Activated CD4-positive, alpha-beta memory T cell treated with anti-CD3 and anti-CD28 coated beads, Interleukin-2, amount 10 ng/mL, durations not matched to agents 7 days and 5 days (primary cell): ENCODE measurements at regions of chr1 and their contacts with region 1.

Region 1: DNA sequence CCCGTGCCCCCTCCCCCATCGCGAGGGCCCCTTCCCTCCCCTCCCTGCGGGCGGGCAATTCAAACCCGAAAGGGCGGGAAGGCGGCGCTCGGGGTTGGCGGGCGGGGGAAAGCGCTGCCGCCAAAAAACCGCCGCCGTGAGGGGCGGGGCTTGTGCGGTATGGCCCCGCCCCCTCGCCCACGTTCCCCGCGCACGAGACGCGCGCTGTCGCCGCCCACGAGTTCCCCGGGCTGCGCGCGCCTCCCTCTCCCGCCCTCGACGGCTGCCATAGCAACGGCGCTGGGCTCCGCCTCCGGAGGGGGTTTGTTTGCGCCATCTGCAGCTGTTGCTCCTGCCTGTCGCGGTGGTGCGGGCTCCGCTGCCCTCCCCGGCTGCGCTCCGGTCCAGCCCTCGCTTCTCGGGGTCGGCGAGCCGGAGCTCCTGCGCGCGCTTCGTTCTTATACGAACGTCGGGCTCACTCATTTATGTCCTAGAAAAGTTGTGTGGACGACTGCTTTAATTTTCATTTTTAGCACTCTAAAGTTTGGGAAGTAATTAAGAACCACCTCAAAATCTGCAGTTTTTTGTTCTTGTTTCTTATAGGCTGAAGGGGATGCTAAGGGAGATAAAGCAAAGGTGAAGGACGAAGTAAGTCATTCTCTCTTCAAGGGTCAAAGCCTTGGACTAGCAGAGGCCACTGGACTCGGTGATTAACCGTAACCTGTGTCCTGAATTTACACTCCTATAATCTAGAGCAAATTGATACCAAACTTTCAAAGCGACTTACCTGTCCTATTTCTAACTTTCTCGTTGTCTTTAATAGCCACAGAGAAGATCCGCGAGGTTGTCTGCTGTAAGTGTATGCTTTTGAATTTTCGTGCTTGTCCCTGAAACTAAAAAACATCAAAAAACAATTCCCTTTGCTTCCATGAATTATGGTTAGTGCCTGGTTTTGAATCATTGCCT is 933 bp downstream of the HMGN2 start:
- DNase-seq: peak; percentile 97
- H3K4me3 Mint-ChIP-seq: peak overlapping the region; percentile 90
- H3K27ac Mint-ChIP-seq: peak overlapping the region; percentile 66
- H3K4me1 Mint-ChIP-seq: peaks cover 52% of the 10 kb centered on the region
- H3K27me3 Mint-ChIP-seq: no peaks in the 10 kb centered on the region

Region 2: GRCh38 chr1:25795946-25796810 is 677.0 kb before region 1 on chr1:
- CTCF ChIA-PET with region 1: no interaction called
- POLR2A ChIA-PET with region 1: no interaction called
- DNase-seq: peak; percentile 35
- H3K4me3 Mint-ChIP-seq: no peak overlapping the region
- H3K27ac Mint-ChIP-seq: no peak overlapping the region
- H3K4me1 Mint-ChIP-seq: peaks cover 35% of the 10 kb centered on the region
- H3K27me3 Mint-ChIP-seq: peaks cover 12% of the 10 kb centered on the region

Region 3: DNA sequence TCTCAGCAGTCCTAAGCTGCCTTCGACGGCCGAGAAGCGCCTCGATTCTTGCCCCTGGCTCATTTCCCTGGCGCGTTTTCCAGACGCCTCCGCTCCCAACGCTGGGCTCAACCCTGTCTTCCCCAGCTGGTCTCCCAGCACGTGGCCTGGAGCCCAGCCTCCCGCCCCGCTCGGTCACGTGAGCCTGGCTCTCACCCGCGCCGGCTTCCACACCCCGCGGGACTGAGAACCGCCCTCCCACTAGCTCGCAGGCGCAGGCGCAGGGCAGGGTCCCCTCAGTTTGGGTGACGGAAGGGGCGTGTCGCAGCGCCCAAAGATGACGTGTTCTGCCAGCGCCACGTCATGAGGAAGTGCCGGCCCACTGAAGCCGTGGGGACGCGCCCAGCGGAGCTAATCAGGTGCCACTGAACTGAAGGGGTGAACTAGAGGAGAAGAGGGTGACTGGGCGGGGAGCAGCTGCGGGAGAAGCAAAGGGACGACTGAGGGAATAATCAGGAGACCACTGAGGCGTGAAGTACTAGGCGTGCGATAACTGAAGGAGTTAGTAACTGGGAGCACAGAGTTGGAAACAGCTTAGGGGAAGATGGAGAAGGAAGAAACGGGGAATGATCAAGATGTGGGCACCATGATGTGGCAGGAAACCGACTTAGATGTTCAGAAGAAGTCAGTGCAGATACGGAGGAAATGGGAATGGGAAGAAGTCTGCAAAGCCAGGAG is 41.0 kb before region 1 on chr1 and contains the start of gene DHDDS:
- CTCF ChIA-PET with region 1: interaction called, 30 read pairs
- POLR2A ChIA-PET with region 1: interaction called, 50 read pairs
- DNase-seq: peak; percentile 99
- H3K4me3 Mint-ChIP-seq: peak within 1 kb of the TSS; percentile 98
- H3K27ac Mint-ChIP-seq: peak within 1 kb of the TSS; percentile 92
- H3K4me1 Mint-ChIP-seq: peaks cover 24% of the 10 kb centered on the region
- H3K27me3 Mint-ChIP-seq: peaks cover 4% of the 10 kb centered on the region
- total RNA-seq, gene DHDDS: 49.7 to 52.3 TPM

Region 4: DNA sequence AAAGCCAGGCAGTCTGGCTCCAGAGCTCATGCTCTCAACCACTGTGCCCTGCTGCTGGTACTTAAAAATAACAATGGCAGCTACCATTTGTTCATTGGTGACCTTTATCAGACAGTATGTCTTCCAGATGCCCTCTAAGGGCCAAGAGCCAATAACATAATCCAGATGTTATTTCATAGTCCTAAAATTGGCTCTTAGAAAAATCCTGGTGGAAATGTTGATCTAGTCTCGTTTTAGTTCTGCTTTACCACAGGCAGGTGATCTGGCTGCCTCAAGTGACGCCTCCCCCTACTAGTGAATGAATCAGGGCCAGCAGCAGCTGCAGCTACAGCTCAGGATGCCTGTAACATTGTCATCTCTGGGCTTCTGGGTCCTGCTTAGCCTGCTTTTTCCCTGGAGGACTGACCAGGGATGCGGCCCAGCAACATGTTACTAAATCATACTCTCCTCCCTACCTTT is 13.6 kb before region 1 on chr1:
- CTCF ChIA-PET with region 1: interaction called, 10 read pairs
- POLR2A ChIA-PET with region 1: interaction called, 12 read pairs
- DNase-seq: no peak
- H3K4me3 Mint-ChIP-seq: no peak overlapping the region
- H3K27ac Mint-ChIP-seq: no peak overlapping the region
- H3K4me1 Mint-ChIP-seq: no peaks in the 10 kb centered on the region
- H3K27me3 Mint-ChIP-seq: no peaks in the 10 kb centered on the region